Naive thymus-derived CD4-positive, alpha-beta T cell (primary cell): ENCODE measurements at regions of chr17 and their contacts with region 1.

Region 1: DNA sequence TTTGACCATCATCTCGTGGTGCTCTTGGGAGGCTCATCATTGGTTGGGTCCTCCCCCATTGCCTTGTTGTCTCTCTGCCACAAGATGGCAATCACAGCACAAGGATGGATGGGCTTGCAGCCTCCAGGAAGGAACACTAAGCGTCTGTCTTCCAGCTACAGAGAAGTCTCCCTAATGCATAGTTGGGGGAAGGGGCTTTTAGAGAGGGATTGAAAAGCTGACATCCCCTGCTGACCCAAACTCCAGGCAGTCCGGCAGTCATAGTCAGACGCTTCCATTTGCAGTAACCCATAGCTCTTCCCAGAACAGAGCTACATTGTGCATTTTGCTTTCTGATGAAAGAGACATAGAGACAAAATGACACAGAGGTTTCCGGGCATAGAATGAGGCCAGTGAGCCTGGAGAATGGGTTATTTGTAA is 111.4 kb downstream of the UTP18 start:
- DNase-seq: peak; percentile 14 to 72 (median 58)
- ATAC-seq: peak; percentile 78
- H3K4me3 ChIP-seq: no peak overlapping the region
- H3K4me3 Mint-ChIP-seq: peak overlapping the region in 5 of 10 donors; percentile 14 to 61 (median 43)
- H3K27ac ChIP-seq: no peak overlapping the region
- H3K27ac Mint-ChIP-seq: peak overlapping the region in 6 of 9 donors; percentile 5 to 82 (median 47)
- H3K4me1 ChIP-seq: peaks cover 0 to 11% of the 10 kb centered on the region in 2 donors
- H3K4me1 Mint-ChIP-seq: peaks cover 4 to 26% (median 21%) of the 10 kb centered on the region in 7 donors
- H3K27me3 ChIP-seq: no peaks in the 10 kb centered on the region
- H3K27me3 Mint-ChIP-seq: peaks cover 0 to 3% (median 0%) of the 10 kb centered on the region in 5 donors

Region 2: GRCh38 chr17:51298508-51299371 is 73.0 kb before region 1 on chr17:
- CTCF ChIA-PET with region 1: interaction called, 10 read pairs
- POLR2A ChIA-PET with region 1: no interaction called
- intact Hi-C with region 1: loop called in 1 of 2 experiments (anchors 2 kb)
- DNase-seq: peak in 5 of 9 donors; percentile 15 to 43 (median 25)
- ATAC-seq: peak; percentile 42
- H3K4me3 ChIP-seq: no peak overlapping the region
- H3K4me3 Mint-ChIP-seq: no peak overlapping the region
- H3K27ac ChIP-seq: no peak overlapping the region
- H3K27ac Mint-ChIP-seq: peak overlapping the region in 2 of 9 donors; percentile 23 to 25
- H3K4me1 ChIP-seq: no peaks in the 10 kb centered on the region
- H3K4me1 Mint-ChIP-seq: peaks cover 0 to 14% (median 5%) of the 10 kb centered on the region in 7 donors
- H3K27me3 ChIP-seq: no peaks in the 10 kb centered on the region
- H3K27me3 Mint-ChIP-seq: no peaks in the 10 kb centered on the region

Region 3: GRCh38 chr17:51325471-51325870 is 46.3 kb before region 1 on chr17:
- CTCF ChIA-PET with region 1: no interaction called
- POLR2A ChIA-PET with region 1: no interaction called
- intact Hi-C with region 1: no loop called
- DNase-seq: no peak
- ATAC-seq: no peak
- H3K4me3 ChIP-seq: no peak overlapping the region
- H3K4me3 Mint-ChIP-seq: no peak overlapping the region
- H3K27ac ChIP-seq: no peak overlapping the region
- H3K27ac Mint-ChIP-seq: no peak overlapping the region
- H3K4me1 ChIP-seq: no peaks in the 10 kb centered on the region
- H3K4me1 Mint-ChIP-seq: no peaks in the 10 kb centered on the region
- H3K27me3 ChIP-seq: no peaks in the 10 kb centered on the region
- H3K27me3 Mint-ChIP-seq: peaks cover 0 to 25% (median 12%) of the 10 kb centered on the region in 5 donors

Region 4: GRCh38 chr17:51413723-51414122 is 42.0 kb after region 1 on chr17:
- CTCF ChIA-PET with region 1: no interaction called
- POLR2A ChIA-PET with region 1: no interaction called
- intact Hi-C with region 1: no loop called
- DNase-seq: no peak
- ATAC-seq: no peak
- H3K4me3 ChIP-seq: no peak overlapping the region
- H3K4me3 Mint-ChIP-seq: no peak overlapping the region
- H3K27ac ChIP-seq: no peak overlapping the region
- H3K27ac Mint-ChIP-seq: no peak overlapping the region
- H3K4me1 ChIP-seq: no peaks in the 10 kb centered on the region
- H3K4me1 Mint-ChIP-seq: peaks cover 9 to 35% (median 32%) of the 10 kb centered on the region in 7 donors
- H3K27me3 ChIP-seq: no peaks in the 10 kb centered on the region
- H3K27me3 Mint-ChIP-seq: peaks cover 0 to 28% (median 0%) of the 10 kb centered on the region in 5 donors

Region 5: DNA sequence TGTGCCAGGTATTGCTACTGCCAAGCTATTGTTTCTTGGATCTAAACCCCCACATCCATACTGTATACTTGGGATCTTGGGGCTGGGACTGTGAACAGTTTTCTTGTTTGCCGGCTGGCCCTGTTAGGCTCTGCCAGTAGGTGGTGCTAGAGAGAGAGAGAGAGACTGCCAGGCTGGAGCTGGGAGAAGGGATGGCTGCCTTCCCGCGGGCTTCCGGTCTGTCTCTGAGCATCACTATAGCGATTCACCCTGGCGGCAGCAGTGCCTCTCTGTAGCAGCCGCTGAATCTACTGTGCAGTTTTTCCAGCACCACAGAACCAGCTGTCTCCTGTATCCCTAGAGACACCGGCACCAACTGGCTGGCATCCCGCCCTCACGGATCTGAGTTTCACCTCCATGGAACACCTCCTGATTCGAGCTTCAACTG is 89.8 kb after region 1 on chr17:
- CTCF ChIA-PET with region 1: interaction called, 14 read pairs
- POLR2A ChIA-PET with region 1: no interaction called
- intact Hi-C with region 1: loop called in 1 of 2 experiments (anchors 1 kb)
- DNase-seq: peak in 8 of 9 donors; percentile 14 to 59 (median 41)
- ATAC-seq: peak; percentile 75
- H3K4me3 ChIP-seq: no peak overlapping the region
- H3K4me3 Mint-ChIP-seq: no peak overlapping the region
- H3K27ac ChIP-seq: no peak overlapping the region
- H3K27ac Mint-ChIP-seq: no peak overlapping the region
- H3K4me1 ChIP-seq: no peaks in the 10 kb centered on the region
- H3K4me1 Mint-ChIP-seq: peaks cover 0 to 6% (median 0%) of the 10 kb centered on the region in 7 donors
- H3K27me3 ChIP-seq: no peaks in the 10 kb centered on the region
- H3K27me3 Mint-ChIP-seq: peaks cover 0 to 6% (median 0%) of the 10 kb centered on the region in 5 donors

Region 6: DNA sequence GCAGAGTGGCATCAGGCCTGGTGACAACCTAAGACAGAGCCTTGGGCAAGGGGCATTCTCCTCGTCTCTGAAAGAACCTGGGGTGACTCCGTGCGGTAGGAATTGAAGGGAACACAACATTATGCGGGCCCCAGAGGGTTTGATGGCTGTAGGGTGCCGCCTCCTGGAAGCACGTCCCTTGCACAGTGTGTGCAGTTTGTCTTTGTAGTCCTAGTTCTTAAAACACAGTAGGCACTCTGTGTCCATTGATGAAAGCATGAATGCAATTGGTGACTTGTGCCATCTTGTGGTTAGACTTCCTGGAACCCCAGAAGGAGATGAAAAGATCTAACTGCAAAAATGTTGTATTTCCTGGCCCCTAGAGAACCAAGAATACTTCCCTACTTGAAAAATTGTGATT is 168.4 kb after region 1 on chr17:
- CTCF ChIA-PET with region 1: interaction called, 48 read pairs
- POLR2A ChIA-PET with region 1: interaction called, 5 read pairs
- intact Hi-C with region 1: loop called (anchors 1 kb)
- DNase-seq: peak in 6 of 9 donors; percentile 5 to 41 (median 22)
- ATAC-seq: peak; percentile 41
- H3K4me3 ChIP-seq: no peak overlapping the region
- H3K4me3 Mint-ChIP-seq: peak overlapping the region in 6 of 10 donors; percentile 3 to 45 (median 12)
- H3K27ac ChIP-seq: no peak overlapping the region
- H3K27ac Mint-ChIP-seq: peak overlapping the region in 7 of 9 donors; percentile 5 to 66 (median 56)
- H3K4me1 ChIP-seq: peaks cover 0 to 4% of the 10 kb centered on the region in 2 donors
- H3K4me1 Mint-ChIP-seq: peaks cover 4 to 25% (median 19%) of the 10 kb centered on the region in 7 donors
- H3K27me3 ChIP-seq: no peaks in the 10 kb centered on the region
- H3K27me3 Mint-ChIP-seq: peaks cover 0 to 3% (median 0%) of the 10 kb centered on the region in 5 donors

Region 7: DNA sequence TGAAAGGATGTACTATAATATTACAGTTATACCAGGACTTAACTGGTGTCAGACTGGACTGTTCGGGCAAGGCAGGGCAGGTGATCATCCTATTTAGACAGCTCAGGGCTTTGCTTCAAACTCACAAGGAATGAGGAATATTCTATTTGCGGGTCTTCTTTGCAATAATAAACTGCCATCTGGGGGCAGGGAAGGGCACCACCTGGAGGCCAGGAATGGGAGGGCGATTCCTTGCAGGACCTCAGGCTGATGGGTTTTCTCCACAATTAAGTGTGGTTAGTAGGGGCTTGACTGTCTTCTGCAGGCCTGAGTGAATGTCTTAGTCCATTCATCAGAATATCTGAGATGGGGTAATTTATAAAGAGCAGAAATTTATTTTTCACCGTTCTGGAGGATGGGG is 362.7 kb after region 1 on chr17:
- CTCF ChIA-PET with region 1: interaction called, 4 read pairs
- POLR2A ChIA-PET with region 1: no interaction called
- intact Hi-C with region 1: loop called in 1 of 2 experiments (anchors 10 kb)
- DNase-seq: peak in 1 of 9 donors; percentile 5
- ATAC-seq: no peak
- H3K4me3 ChIP-seq: no peak overlapping the region
- H3K4me3 Mint-ChIP-seq: no peak overlapping the region
- H3K27ac ChIP-seq: no peak overlapping the region
- H3K27ac Mint-ChIP-seq: no peak overlapping the region
- H3K4me1 ChIP-seq: no peaks in the 10 kb centered on the region
- H3K4me1 Mint-ChIP-seq: no peaks in the 10 kb centered on the region
- H3K27me3 ChIP-seq: no peaks in the 10 kb centered on the region
- H3K27me3 Mint-ChIP-seq: peaks cover 3 to 33% (median 8%) of the 10 kb centered on the region in 5 donors